Endothelial cell of umbilical vein (primary cell): ENCODE measurements at regions of chr6 and their contacts with region 1.

Region 1: DNA sequence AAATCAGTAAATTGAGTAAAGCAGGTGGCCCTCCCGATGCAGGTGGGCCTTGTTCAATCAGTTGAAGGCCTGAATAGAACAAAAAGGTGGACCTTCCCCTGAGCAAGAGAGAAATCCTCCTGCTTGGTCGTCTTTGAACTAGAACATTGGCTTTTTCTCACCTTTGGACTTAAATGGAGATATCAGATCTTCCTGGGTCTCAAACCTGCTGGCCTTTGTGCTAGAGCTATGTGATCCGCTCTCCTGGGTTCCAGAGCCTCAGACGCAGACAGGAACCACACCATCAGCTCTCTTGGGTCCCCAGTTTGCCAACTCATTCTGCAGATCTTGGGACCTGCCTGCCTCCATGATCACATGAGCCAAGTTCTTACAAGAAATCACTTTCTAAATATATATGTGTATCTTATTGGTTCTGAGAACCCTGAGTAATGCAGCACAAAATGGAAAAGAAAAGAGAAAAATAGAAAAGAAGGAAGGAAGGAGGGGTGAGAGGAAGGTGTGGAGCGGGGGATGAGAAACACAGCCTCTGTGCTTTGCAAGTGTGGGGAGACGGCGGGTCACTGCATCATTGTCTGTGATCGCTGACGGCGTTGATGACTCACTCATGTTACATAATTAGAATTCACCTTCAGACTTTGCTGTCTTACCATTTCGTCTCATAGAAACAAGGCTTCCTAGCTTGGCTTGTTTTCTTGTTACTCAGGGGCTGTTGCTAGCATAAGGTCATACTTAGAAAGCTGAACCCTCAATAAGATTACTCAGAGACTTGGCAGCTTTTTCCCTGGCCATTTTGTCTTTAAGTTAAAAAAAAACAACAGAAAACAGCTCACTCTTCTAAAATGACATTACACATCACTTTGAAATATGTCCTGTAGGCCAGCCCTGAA is 85.7 kb upstream of the NEDD9 start:
- DNase-seq: peak; percentile 99
- H3K4me3 ChIP-seq: no peak overlapping the region
- H3K27ac ChIP-seq: peak overlapping the region; percentile 100
- H3K4me1 ChIP-seq: peaks cover 37% of the 10 kb centered on the region
- H3K27me3 ChIP-seq: no peaks in the 10 kb centered on the region
- CTCF ChIP-seq: no peak
- POLR2A ChIP-seq: no peak

Region 2: GRCh38 chr6:11144393-11144851 is 173.7 kb before region 1 on chr6:
- CTCF ChIA-PET with region 1: interaction called, 4 read pairs
- POLR2A ChIA-PET with region 1: no interaction called
- dilution Hi-C with region 1: no loop called
- intact Hi-C with region 1: loop called (anchors 1 kb)
- DNase-seq: peak; percentile 70
- H3K4me3 ChIP-seq: no peak overlapping the region
- H3K27ac ChIP-seq: no peak overlapping the region
- H3K4me1 ChIP-seq: no peaks in the 10 kb centered on the region
- H3K27me3 ChIP-seq: no peaks in the 10 kb centered on the region
- CTCF ChIP-seq: peak; percentile 86 to 95
- POLR2A ChIP-seq: no peak

Region 3: DNA sequence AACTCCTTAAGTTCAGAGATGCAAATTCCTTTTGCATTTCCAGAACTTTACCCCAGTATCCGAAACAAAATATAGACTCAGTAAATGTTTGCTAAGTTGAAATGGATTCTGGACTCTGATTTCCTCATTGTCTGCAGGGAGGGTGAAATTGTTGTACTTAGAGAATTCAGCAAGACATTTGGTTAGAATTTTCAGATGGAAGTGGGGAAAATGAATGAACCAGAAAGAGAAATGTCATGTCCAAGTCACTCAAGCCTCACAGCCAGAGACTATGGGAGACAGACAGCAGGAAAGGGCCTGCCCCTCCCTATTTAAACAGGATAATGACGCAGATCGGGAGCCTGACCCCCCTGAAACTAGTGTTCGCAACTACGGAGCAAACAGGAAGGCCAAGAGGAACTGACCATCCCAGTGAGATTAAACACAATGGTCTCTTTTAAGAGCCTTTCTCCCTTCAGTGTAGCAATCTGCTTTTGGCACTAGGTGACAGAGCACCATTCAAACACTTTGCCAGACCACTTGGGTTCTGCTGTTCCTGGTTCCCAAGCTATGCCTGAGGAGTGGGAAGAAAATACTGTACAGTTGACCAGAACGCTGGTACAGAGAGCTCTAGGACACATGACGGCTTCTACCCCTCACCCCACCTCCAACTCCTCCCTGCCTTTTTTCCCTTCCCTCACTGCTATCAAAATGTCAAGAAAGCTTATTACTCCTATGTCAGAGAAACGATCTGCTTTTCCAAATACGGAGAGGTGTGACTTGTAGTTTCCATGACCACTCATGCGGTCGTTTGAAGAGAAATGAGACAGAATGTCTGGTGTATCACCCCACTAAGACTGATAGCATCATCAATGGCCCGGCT is 99.4 kb before region 1 on chr6:
- CTCF ChIA-PET with region 1: no interaction called
- POLR2A ChIA-PET with region 1: no interaction called
- dilution Hi-C with region 1: no loop called
- intact Hi-C with region 1: loop called (anchors 1 kb)
- DNase-seq: peak; percentile 96
- H3K4me3 ChIP-seq: peak overlapping the region in 1 of 3 experiments; percentile 1
- H3K27ac ChIP-seq: peak overlapping the region; percentile 91
- H3K4me1 ChIP-seq: peaks cover 96% of the 10 kb centered on the region
- H3K27me3 ChIP-seq: no peaks in the 10 kb centered on the region
- CTCF ChIP-seq: no peak
- POLR2A ChIP-seq: peak; percentile 78

Region 4: DNA sequence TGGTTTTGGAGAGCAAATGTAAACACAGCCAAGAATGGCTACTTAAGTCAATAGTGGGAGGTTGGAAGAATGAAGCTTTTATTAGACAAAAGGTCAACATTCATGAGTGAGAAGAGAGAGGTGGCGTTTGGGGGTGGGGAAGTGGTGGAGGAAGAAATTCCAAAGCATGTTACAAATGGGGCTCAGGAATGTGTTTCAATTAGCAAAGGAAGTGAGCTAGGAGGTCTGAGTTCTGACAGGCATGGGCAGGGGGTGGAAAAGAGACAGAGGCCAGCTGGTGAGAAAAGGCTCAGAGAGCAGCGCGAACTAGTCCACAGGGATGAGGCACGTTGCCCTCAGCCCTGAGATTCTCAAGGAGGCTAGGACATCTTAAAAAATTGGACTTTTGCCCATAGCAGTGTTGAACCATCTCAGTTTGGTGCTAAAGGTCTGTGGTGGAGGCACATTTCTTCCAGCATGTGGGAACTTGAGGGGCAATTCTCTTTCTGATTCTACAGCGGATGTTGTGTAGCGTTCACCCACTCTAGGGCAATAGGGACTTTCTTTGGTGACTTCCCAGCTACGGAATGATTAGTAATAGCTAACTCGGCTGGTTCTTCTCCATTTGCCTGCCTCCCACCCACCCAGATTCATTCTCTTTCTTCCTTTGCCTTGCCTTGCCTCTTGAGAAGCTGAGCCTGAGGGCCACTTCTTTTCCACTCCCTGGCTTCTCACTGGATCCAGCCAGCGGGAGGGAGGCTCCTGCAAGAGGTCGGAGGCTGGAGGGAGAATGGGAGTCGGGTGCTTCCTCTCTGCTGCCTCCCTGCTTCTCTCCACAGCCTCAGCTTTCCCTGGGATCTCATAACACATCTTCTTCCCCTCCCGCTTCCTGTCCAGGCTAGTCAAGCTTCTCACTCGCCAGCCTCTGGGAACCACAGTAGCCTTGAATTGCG is 40.6 kb before region 1 on chr6:
- CTCF ChIA-PET with region 1: interaction called, 5 read pairs
- POLR2A ChIA-PET with region 1: no interaction called
- dilution Hi-C with region 1: no loop called
- intact Hi-C with region 1: loop called (anchors 1 kb)
- DNase-seq: peak; percentile 71
- H3K4me3 ChIP-seq: no peak overlapping the region
- H3K27ac ChIP-seq: peak overlapping the region; percentile 51
- H3K4me1 ChIP-seq: peaks cover 12% of the 10 kb centered on the region
- H3K27me3 ChIP-seq: no peaks in the 10 kb centered on the region
- CTCF ChIP-seq: no peak
- POLR2A ChIP-seq: no peak

Region 5: DNA sequence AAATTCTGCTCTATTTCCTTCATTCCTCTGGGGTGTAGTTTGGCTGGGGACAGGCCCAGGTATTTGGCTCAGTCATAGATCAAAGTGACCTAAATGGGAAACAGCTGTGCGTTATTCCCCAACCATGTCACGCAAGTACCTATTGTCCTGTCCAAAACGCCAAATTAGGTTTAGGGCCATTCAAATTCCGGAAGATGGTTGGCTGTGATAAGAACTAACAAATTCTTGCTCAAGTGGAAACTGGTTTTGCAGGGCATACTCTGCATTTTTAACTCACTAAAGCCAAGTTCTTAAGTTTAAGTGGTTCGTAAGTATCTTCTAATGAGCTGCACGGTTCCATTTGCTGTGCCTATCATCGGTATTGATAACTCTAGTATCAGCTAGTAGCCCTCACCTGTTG is 71.9 kb after region 1 on chr6:
- CTCF ChIA-PET with region 1: no interaction called
- POLR2A ChIA-PET with region 1: no interaction called
- dilution Hi-C with region 1: no loop called
- intact Hi-C with region 1: loop called (anchors 1 kb)
- DNase-seq: peak; percentile 83
- H3K4me3 ChIP-seq: no peak overlapping the region
- H3K27ac ChIP-seq: peak overlapping the region; percentile 68
- H3K4me1 ChIP-seq: peaks cover 28% of the 10 kb centered on the region
- H3K27me3 ChIP-seq: peaks cover 2 to 4% of the 10 kb centered on the region in 2 experiments
- CTCF ChIP-seq: no peak
- POLR2A ChIP-seq: no peak

Region 6: DNA sequence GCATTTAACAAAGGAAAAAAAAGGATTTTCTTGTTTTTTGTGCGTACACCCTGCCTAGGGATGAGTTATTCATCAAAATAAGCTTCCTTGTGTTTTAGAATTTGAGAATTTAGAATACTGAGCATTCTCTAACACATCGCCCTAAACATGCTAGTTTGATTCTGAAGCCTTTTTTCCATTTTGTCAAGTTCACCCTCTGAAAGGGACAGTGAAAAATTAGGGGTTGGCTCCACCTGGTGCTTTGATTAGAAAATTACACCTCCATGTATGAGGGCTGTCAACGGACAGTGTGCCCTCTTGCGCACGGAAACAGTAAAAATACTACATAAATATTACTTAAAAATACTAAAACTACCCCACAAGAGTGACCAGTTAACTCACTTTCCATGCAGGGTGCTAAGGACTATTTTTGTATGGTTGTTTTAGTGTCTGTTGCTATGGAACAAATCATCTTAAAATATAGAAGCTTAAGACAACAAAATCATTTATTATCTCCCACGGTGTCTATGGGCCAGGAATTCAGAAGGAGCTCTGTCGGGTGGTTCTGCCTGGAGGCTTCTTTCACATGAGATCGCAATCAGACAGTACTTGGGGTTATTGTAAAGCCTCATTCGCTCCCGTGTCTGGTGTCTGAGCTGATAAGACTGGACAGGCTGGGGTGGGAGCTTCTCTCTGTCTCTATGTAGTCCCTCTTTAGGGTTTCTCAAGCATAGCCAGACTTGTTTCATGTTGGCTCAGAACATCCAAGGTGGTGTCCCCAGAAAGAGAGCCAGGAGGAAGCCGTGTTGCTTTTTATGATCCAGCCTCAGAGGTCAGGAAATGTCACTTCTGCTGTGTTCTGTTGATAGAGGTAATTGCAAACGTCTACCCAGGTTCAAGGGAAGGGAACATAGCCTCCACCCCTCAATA is 178.3 kb after region 1 on chr6:
- CTCF ChIA-PET with region 1: interaction called, 12 read pairs
- POLR2A ChIA-PET with region 1: no interaction called
- dilution Hi-C with region 1: no loop called
- intact Hi-C with region 1: loop called (anchors 1 kb)
- DNase-seq: peak; percentile 92
- H3K4me3 ChIP-seq: no peak overlapping the region
- H3K27ac ChIP-seq: peak overlapping the region; percentile 42
- H3K4me1 ChIP-seq: peaks cover 5% of the 10 kb centered on the region
- H3K27me3 ChIP-seq: no peaks in the 10 kb centered on the region
- CTCF ChIP-seq: peak; percentile 67 to 71
- POLR2A ChIP-seq: no peak

Region 7: DNA sequence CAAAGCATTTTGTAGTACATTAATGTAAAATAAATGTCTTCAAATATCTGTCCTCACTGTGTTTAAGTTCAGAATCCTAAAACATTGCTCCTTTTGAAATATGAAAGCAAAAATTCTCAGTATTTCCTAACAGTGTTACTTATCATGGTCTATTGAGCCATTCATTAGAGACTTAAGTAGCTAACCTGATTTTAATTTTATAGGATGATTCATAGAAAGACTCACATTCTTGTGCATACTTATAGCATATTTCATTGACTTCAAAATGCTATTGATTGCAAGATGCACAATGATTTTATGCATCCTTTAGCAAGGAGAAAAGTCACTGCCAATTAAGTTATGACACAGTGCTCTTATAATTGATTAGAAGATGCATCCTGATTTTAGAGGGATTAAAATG is 779.7 kb after region 1 on chr6:
- CTCF ChIA-PET with region 1: no interaction called
- POLR2A ChIA-PET with region 1: no interaction called
- dilution Hi-C with region 1: no loop called
- intact Hi-C with region 1: no loop called
- DNase-seq: no peak
- H3K4me3 ChIP-seq: no peak overlapping the region
- H3K27ac ChIP-seq: no peak overlapping the region
- H3K4me1 ChIP-seq: no peaks in the 10 kb centered on the region
- H3K27me3 ChIP-seq: no peaks in the 10 kb centered on the region
- CTCF ChIP-seq: no peak
- POLR2A ChIP-seq: no peak